Spleen (tissue), 13 donors: ENCODE measurements at regions of chr10 and their contacts with region 1.

Region 1: GRCh38 chr10:133520155-133520738 is 6.9 kb upstream of the CYP2E1 start:
- DNase-seq: peak; percentile 97
- H3K4me3 ChIP-seq: peak overlapping the region; percentile 6 to 66 (median 37)
- H3K27ac ChIP-seq: peak overlapping the region in 4 of 8 donors; percentile 27 to 60 (median 55)
- H3K4me1 ChIP-seq: peaks cover 0 to 13% (median 11%) of the 10 kb centered on the region in 6 donors
- H3K27me3 ChIP-seq: peaks cover 0 to 1% (median 0%) of the 10 kb centered on the region in 7 donors
- CTCF ChIP-seq: peak; percentile 45 to 97 (median 95)
- POLR2A ChIP-seq: no peak

Region 2: GRCh38 chr10:133329491-133330202 is 190.6 kb before region 1 on chr10:
- intact Hi-C with region 1: loop called (anchors 10 kb)
- DNase-seq: peak; percentile 96
- H3K4me3 ChIP-seq: peak overlapping the region in 3 of 8 donors; percentile 10 to 47 (median 14)
- H3K27ac ChIP-seq: no peak overlapping the region
- H3K4me1 ChIP-seq: peaks cover 8 to 33% (median 27%) of the 10 kb centered on the region in 6 donors
- H3K27me3 ChIP-seq: peaks cover 3 to 80% (median 58%) of the 10 kb centered on the region in 7 donors
- CTCF ChIP-seq: peak; percentile 58 to 95 (median 94)
- POLR2A ChIP-seq: no peak